PC-9 (cell line): ENCODE measurements at regions of chr7 and their contacts with region 1.

Region 1: DNA sequence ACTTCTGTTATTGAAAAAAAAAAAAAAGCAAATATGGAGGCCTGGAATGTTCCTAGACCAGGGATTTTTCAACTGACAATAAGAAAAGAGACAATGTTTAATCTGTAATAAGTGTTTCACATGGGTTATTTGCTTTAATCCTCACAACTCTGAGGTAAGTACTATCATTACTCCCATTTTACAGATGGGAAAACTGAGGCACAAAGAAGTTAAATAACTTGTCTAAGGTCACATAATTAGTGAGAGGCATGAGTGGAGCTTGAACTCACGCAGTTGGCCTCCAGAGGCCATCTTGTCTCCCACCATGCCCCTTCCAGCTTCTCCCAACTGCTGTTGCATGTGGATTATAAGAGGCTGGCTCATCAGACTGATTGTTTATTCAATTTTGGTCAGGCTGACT is 36.6 kb upstream of the CREB5 start:
- DNase-seq: no peak
- H3K4me3 ChIP-seq: no peak overlapping the region
- H3K27ac ChIP-seq: no peak overlapping the region
- H3K4me1 ChIP-seq: peaks cover 16% of the 10 kb centered on the region
- H3K27me3 ChIP-seq: no peaks in the 10 kb centered on the region
- CTCF ChIP-seq: no peak

Region 2: DNA sequence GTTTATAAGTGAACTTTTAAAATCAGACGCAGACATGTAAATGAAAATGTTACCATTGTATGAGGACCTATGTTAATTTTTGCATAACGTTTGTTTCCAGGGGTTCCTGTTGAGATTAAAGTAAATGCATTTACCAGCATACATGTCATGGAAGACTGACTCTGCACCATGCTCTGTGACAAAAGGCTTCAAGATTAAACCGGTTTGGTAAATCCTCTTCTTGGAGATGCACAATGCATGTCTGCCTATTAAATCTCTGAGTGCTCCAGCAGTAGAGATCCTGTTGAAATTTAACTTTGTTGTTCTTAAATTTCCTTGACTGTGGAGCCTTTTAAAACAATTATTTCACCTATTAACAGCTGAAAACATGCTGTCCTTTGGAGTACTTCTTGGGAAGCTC is 158.6 kb before region 1 on chr7:
- CTCF ChIA-PET with region 1: interaction called, 13 read pairs
- POLR2A ChIA-PET with region 1: no interaction called
- intact Hi-C with region 1: no loop called
- DNase-seq: no peak
- H3K4me3 ChIP-seq: no peak overlapping the region
- H3K27ac ChIP-seq: no peak overlapping the region
- H3K4me1 ChIP-seq: no peaks in the 10 kb centered on the region
- H3K27me3 ChIP-seq: no peaks in the 10 kb centered on the region; the same call in 1 of the 2 replicates
- CTCF ChIP-seq: no peak

Region 3: GRCh38 chr7:28980451-28980891 is 604.7 kb after region 1 on chr7:
- CTCF ChIA-PET with region 1: no interaction called
- POLR2A ChIA-PET with region 1: no interaction called
- intact Hi-C with region 1: no loop called
- DNase-seq: peak in 1 of 2 experiments; percentile 70
- H3K4me3 ChIP-seq: no peak overlapping the region
- H3K27ac ChIP-seq: no peak overlapping the region
- H3K4me1 ChIP-seq: peaks cover 21% of the 10 kb centered on the region
- H3K27me3 ChIP-seq: no peaks in the 10 kb centered on the region
- CTCF ChIP-seq: no peak